Right cardiac atrium (tissue), 5 donors: ENCODE measurements at regions of chr16 and their contacts with region 1.

Region 1: GRCh38 chr16:3400779-3401688 is at the starts of genes ZNF174 and ZSCAN32:
- DNase-seq: peak; percentile 98 to 99 (median 99)
- ATAC-seq: peak; percentile 100
- H3K4me3 ChIP-seq: peak within 1 kb of the TSS; percentile 97
- H3K27ac ChIP-seq: peak within 1 kb of the TSS; percentile 92
- H3K4me1 ChIP-seq: peaks cover 7% of the 10 kb centered on the region
- H3K27me3 ChIP-seq: no peaks in the 10 kb centered on the region
- total RNA-seq, gene ZNF174: 8.9 to 13.5 (median 11.8) TPM
- total RNA-seq, gene ZSCAN32: 5.9 to 9.0 (median 7.6) TPM

Region 2: DNA sequence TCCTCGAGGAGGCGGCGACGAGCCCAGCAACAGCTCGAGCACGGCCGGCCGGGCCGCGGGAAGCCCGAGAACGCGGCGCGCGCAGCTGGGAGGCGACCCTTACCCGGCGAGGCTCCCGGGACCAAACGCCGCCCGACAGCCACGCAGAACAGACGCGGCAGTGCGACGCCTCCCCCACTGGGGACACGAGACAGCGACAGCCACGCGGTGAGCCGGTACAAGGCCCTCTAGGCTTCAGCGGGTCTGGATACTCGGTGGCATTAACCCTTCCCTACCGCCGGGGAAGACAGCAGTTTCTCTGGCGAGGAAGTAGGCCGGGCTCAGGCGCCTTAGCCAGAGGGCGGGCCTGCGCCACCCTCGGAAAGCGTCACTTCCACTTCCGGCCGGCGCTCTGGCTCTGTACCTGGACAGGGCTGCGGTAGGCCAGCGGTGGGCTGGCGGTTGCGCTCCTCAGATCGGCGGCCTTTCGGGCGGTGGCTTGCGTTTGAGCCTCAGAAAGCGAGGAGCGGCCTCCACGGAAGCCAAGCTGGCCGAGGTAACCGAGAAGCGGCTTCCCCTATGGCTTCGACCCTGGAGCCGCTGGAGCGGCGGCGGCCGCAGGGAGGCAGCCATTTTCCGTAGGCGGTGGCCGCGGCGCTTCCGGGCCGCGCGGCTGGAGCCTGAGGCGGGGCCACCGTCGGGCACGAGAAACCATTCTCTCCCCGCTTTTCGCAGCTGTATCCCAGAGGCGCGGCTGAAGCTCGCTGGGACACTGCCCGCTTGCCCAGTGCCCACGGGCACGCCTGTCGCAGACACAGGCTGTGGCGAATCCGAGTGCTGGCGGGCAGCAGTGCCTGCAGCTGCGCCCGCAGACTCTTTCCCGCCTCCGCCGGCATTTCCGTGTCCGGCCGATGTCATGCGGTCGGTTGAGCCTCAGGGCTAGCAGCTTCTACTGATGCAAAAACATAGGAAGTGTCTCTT is 95.6 kb before region 1 on chr16 and contains the starts of genes TIGD7 and ZNF75A:
- intact Hi-C with region 1: loop called in 1 of 4 experiments (anchors 10 kb)
- DNase-seq: peak; percentile 92 to 95 (median 95)
- ATAC-seq: peak; percentile 99
- H3K4me3 ChIP-seq: peak within 1 kb of the TSS; percentile 83
- H3K27ac ChIP-seq: peak within 1 kb of the TSS; percentile 97
- H3K4me1 ChIP-seq: no peaks in the 10 kb centered on the region
- H3K27me3 ChIP-seq: no peaks in the 10 kb centered on the region
- total RNA-seq, gene TIGD7: 5.1 to 8.7 (median 6.4) TPM
- total RNA-seq, gene ZNF75A: 19.8 to 23.0 (median 21.5) TPM

Region 3: DNA sequence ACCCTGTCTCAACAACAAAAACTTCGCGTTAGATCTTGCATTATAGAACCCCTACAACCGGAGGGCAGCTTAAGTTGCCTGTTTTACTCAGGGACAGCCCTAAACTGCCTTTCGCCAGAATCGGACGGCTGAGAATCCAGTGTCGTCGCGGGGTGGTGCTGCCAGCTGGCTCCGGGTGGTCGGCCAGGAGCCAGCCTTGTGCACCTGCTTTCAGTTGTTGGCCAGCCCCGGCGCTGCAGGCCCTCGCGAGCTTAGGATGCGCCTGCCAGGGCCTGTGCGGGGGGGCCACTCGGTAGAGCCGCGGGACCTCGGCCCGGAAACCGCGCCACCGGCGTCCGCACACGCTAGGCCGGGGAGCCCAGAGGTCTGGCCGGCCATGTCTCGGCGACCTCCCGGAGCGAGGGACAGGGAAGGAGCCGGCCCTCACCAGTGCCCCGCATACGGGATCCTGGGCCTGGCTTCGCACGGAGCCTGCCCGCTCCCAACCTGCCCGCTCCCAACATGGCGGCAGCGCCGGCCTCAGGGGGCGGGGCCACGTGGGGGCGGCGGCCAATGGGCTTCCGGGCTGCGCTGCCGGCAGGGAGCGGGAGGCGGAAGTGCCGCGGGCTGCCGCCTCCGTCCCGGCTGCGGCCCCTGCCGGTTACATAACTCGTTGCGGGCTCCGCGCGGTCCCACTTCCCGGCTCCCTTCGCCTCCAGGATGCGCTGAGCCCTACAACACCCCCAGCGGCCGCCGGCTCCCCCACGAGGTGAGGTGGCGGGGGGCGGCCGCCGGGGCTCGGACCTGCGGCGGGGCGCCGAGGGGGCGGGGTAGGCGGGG is 56.6 kb after region 1 on chr16:
- intact Hi-C with region 1: loop called in 2 of 4 experiments (anchors 5 to 10 kb)
- DNase-seq: peak; percentile 89 to 97 (median 97)
- ATAC-seq: peak; percentile 96
- H3K4me3 ChIP-seq: peak overlapping the region; percentile 94
- H3K27ac ChIP-seq: peak overlapping the region; percentile 97
- H3K4me1 ChIP-seq: peaks cover 14% of the 10 kb centered on the region
- H3K27me3 ChIP-seq: no peaks in the 10 kb centered on the region

Region 4: DNA sequence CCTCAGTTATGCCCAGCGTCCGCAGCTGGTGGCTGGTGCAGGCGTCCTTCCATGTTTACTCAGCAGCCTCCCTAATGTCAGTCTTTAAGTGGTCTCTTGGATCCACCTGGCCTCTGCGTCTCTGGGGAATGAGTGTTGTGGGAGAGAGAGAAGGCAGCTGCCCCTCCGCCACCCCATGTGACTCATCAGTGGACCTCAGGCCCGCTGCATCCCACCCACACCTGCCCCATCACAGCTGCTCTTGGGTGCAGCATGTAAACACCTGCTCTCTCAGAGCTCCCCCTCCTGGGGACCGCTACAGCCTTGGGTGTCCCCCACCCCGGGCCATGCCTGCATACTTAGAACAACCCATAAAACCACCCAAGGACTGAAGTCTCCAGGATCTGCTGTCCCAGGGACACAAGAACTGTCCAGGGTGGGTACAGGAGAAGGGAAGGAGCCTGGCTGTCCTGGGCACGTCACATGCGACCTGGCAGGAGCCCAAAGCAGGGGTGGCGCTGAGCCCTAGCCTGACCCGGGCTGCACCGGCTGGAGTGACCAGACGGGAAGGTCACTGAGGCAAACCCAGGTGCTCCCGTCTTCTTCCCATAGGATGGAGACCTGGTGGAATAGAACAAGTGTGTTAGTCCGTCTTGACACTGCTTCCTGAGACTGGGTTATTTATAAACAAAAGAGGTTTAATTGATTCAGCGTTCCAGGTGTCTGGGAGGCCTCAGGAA is 90.0 kb after region 1 on chr16:
- intact Hi-C with region 1: loop called in 1 of 4 experiments (anchors 10 kb)
- DNase-seq: peak in 2 of 3 donors; percentile 21 to 49
- ATAC-seq: no peak
- H3K4me3 ChIP-seq: no peak overlapping the region
- H3K27ac ChIP-seq: no peak overlapping the region
- H3K4me1 ChIP-seq: no peaks in the 10 kb centered on the region
- H3K27me3 ChIP-seq: no peaks in the 10 kb centered on the region